ENCODE measurements at regions of chr1 and their contacts with region 1.

Region 1: GRCh38 chr1:43763497-43763973 is 56.2 kb downstream of the ST3GAL3 start:
- H3K4me3 ChIP-seq: no peak overlapping the region
- H3K27ac ChIP-seq: no peak overlapping the region
- H3K4me1 ChIP-seq: no peaks in the 10 kb centered on the region
- CTCF ChIP-seq: peak; percentile 87

Region 2: GRCh38 chr1:43481491-43481890 is 282.0 kb before region 1 on chr1:
- CTCF ChIA-PET with region 1: no interaction called
- POLR2A ChIA-PET with region 1: no interaction called
- H3K4me3 ChIP-seq: no peak overlapping the region
- H3K27ac ChIP-seq: no peak overlapping the region
- H3K4me1 ChIP-seq: no peaks in the 10 kb centered on the region
- CTCF ChIP-seq: no peak

Region 3: DNA sequence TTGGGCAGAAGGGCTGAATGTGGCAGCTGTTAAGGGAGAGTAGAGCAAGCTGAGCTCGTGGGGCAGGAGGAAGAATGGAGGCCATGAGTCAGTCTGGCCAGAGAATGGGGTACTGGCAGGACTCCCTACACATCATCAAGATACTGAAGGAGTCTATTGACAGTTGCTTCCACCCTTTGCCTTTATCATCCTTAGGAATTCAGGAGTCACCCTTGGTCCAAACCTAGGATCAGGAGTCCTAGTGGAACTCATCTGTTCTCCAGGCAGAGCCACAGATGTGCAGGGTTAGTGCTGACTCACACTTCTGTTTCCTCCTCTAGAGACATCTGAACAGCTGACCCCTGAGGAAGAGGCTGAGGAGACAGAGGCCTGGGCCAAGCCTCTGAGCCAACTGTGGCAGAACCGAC is 74.9 kb before region 1 on chr1:
- CTCF ChIA-PET with region 1: no interaction called
- POLR2A ChIA-PET with region 1: no interaction called
- H3K4me3 ChIP-seq: no peak overlapping the region
- H3K27ac ChIP-seq: no peak overlapping the region
- H3K4me1 ChIP-seq: no peaks in the 10 kb centered on the region
- CTCF ChIP-seq: no peak

Region 4: GRCh38 chr1:43729816-43730463 is 33.6 kb before region 1 on chr1:
- CTCF ChIA-PET with region 1: interaction called, 13 read pairs
- POLR2A ChIA-PET with region 1: no interaction called
- H3K4me3 ChIP-seq: no peak overlapping the region
- H3K27ac ChIP-seq: no peak overlapping the region
- H3K4me1 ChIP-seq: no peaks in the 10 kb centered on the region
- CTCF ChIP-seq: no peak

Region 5: GRCh38 chr1:43774359-43774758 is 10.8 kb after region 1 on chr1:
- CTCF ChIA-PET with region 1: interaction called, 19 read pairs
- POLR2A ChIA-PET with region 1: no interaction called
- H3K4me3 ChIP-seq: no peak overlapping the region
- H3K27ac ChIP-seq: no peak overlapping the region
- H3K4me1 ChIP-seq: no peaks in the 10 kb centered on the region
- CTCF ChIP-seq: no peak

Region 6: DNA sequence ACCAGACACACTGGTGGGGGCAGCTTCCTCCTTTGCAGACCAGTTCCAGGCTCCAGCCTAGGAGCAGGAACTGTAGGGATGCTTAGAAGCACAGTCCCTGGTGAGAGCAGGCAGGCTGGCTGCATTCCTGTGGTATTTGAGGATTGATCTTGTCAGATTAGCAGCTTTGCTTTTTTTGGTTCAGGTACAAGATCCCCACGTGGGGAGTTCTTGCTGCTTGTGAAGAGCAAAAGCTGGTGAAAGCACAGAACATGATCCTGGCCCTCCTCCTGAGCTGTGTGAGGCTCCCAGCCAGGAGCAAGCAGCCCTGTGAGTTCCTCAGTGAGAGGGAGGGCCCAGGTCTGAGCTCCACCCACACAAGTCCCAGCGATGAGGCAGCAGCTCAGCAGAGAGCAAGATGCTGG is 94.8 kb after region 1 on chr1:
- CTCF ChIA-PET with region 1: interaction called, 13 read pairs
- POLR2A ChIA-PET with region 1: interaction called, 4 read pairs
- H3K4me3 ChIP-seq: no peak overlapping the region
- H3K27ac ChIP-seq: no peak overlapping the region
- H3K4me1 ChIP-seq: peaks cover 7% of the 10 kb centered on the region
- CTCF ChIP-seq: no peak

Region 7: GRCh38 chr1:44002606-44003157 is 239.1 kb after region 1 on chr1:
- CTCF ChIA-PET with region 1: interaction called, 13 read pairs
- POLR2A ChIA-PET with region 1: no interaction called
- H3K4me3 ChIP-seq: no peak overlapping the region
- H3K27ac ChIP-seq: no peak overlapping the region
- H3K4me1 ChIP-seq: no peaks in the 10 kb centered on the region
- CTCF ChIP-seq: no peak

Region 8: GRCh38 chr1:44049839-44050238 is 286.3 kb after region 1 on chr1:
- CTCF ChIA-PET with region 1: interaction called, 66 read pairs
- POLR2A ChIA-PET with region 1: no interaction called
- H3K4me3 ChIP-seq: no peak overlapping the region
- H3K27ac ChIP-seq: no peak overlapping the region
- H3K4me1 ChIP-seq: no peaks in the 10 kb centered on the region
- CTCF ChIP-seq: no peak

Region 9: GRCh38 chr1:44072204-44072603 is 308.7 kb after region 1 on chr1:
- CTCF ChIA-PET with region 1: no interaction called
- POLR2A ChIA-PET with region 1: no interaction called
- H3K4me3 ChIP-seq: no peak overlapping the region
- H3K27ac ChIP-seq: no peak overlapping the region
- H3K4me1 ChIP-seq: no peaks in the 10 kb centered on the region
- CTCF ChIP-seq: no peak